ENCODE measurements at regions of chr14 and their contacts with region 1.

Region 1: DNA sequence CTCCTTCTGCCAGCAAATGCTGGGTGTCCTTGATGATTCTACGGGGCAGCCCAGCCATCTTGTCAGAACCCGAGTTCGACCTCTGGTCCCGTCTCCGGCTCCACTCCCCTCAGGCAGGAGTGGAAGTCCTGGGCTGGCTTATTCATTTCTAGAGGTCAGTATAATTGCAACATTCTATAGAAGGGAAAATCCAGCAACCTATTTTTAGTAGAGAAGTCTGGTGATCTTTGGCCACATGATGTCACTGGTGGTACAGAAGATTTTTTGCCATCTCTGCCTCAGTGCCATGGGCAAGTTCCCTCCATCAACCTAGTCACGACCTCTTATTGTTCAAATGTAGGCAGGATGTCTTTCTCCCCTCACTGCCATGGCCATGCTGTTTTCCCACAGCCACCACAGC is 22.4 kb downstream of the OR10G2 start:
- DNase-seq: no peak
- H3K4me3 ChIP-seq: no peak overlapping the region
- H3K27ac ChIP-seq: no peak overlapping the region
- H3K4me1 ChIP-seq: no peaks in the 10 kb centered on the region
- H3K27me3 ChIP-seq: no peaks in the 10 kb centered on the region
- CTCF ChIP-seq: no peak

Region 2: DNA sequence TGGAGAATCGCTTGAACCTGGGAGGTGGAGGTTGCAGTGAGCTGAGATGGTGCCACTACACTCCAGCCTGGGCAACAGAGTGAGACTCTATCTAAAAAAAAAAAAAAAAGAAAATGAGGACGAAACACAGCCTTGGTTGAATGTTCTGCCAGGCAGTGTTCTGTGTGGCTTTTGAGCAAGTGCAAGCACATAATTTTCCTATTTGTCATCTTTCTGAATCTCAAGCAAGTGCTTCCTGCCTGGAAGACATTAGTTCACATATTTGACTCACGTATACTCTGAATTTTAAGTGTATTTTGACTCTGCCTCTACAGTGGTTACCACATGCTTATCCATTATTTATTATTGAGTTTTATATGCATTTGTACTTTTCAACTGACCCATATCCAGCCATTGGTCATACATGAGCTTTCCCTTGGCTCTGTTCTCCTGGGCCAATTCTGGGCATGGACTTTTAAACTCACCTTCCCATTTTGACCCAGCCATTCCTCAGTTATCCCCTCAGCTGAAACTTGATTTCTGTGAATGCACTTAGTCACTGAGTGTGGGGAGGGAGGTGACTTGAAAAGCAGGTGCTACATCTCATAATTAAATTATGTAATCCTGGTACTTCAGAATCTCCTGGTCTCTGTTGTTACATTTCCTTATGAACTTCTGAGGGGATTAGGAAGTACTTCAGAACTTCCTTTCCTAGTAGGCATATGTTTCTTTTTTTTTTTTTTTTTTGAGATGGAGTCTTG is 14.3 kb after region 1 on chr14:
- CTCF ChIA-PET with region 1: no interaction called
- POLR2A ChIA-PET with region 1: no interaction called
- intact Hi-C with region 1: no loop called
- DNase-seq: peak; percentile 7 to 58
- H3K4me3 ChIP-seq: no peak overlapping the region
- H3K27ac ChIP-seq: peak overlapping the region; percentile 41; the same call in 1 of the 2 replicates
- H3K4me1 ChIP-seq: peaks cover 14% of the 10 kb centered on the region
- H3K27me3 ChIP-seq: no peaks in the 10 kb centered on the region
- CTCF ChIP-seq: no peak

Region 3: GRCh38 chr14:21734457-21735074 is 122.2 kb after region 1 on chr14:
- CTCF ChIA-PET with region 1: no interaction called
- POLR2A ChIA-PET with region 1: no interaction called
- intact Hi-C with region 1: no loop called
- DNase-seq: peak in 1 of 2 experiments; percentile 7
- H3K4me3 ChIP-seq: no peak overlapping the region
- H3K27ac ChIP-seq: no peak overlapping the region
- H3K4me1 ChIP-seq: no peaks in the 10 kb centered on the region
- H3K27me3 ChIP-seq: peaks cover 5% of the 10 kb centered on the region; the same call in 1 of the 2 replicates
- CTCF ChIP-seq: peak; percentile 78

Region 4: DNA sequence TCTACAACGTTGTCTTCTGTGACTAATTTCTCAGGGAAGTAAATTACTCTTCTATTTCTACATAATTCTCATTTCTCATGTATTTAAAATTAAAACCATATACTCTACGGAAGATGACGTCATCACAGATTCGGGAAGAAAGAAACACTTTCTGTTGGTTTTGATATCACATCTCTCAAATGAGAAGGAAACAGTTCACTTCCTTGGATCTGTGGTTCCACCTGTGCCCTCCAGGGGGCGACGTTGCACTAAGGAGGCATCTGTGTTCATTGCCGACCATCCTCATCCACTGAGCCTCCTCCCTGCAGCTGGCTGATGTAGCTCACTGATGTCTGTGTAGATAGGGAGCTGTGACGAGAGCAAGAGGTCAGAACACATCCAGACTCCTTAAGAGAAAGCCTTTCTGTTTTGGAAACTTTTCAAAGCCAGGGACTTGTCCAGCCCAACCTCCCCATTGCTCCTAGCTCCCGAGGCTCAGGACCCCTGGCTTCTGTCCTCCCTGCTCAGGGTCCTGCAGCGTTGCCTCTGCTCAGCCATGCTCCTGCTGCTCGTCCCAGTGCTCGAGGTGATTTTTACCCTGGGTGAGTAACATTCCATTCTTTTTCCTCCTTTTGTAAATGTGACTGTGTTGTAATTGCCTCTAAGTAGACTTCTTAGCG is 234.0 kb after region 1 on chr14:
- CTCF ChIA-PET with region 1: no interaction called
- POLR2A ChIA-PET with region 1: no interaction called
- intact Hi-C with region 1: loop called (anchors 2 kb)
- DNase-seq: peak in 1 of 2 experiments; percentile 28
- H3K4me3 ChIP-seq: no peak overlapping the region
- H3K27ac ChIP-seq: no peak overlapping the region
- H3K4me1 ChIP-seq: no peaks in the 10 kb centered on the region
- H3K27me3 ChIP-seq: no peaks in the 10 kb centered on the region
- CTCF ChIP-seq: peak; percentile 68